Activated naive CD4-positive, alpha-beta T cell treated with anti-CD3 and anti-CD28 coated beads, Interleukin-2, amount 10 ng/mL, durations not matched to agents 7 days and 5 days (primary cell): ENCODE measurements at regions of chr12 and their contacts with region 1.

Region 1: GRCh38 chr12:104478396-104479122 is 21.8 kb downstream of the CHST11 start:
- DNase-seq: peak; percentile 46
- H3K4me3 Mint-ChIP-seq: peak overlapping the region; percentile 83
- H3K27ac Mint-ChIP-seq: peak overlapping the region; percentile 93
- H3K4me1 Mint-ChIP-seq: peaks cover 91% of the 10 kb centered on the region
- H3K27me3 Mint-ChIP-seq: no peaks in the 10 kb centered on the region

Region 2: GRCh38 chr12:104456417-104456949 is 22.1 kb before region 1 on chr12 and contains the start of gene CHST11:
- CTCF ChIA-PET with region 1: interaction called, 15 read pairs
- DNase-seq: peak; percentile 82
- H3K4me3 Mint-ChIP-seq: peak within 1 kb of the TSS; percentile 99
- H3K27ac Mint-ChIP-seq: peak within 1 kb of the TSS; percentile 96
- H3K4me1 Mint-ChIP-seq: peaks cover 39% of the 10 kb centered on the region
- H3K27me3 Mint-ChIP-seq: peaks cover 42% of the 10 kb centered on the region

Region 3: GRCh38 chr12:104467346-104467837 is 11.2 kb before region 1 on chr12:
- CTCF ChIA-PET with region 1: interaction called, 12 read pairs
- DNase-seq: no peak
- H3K4me3 Mint-ChIP-seq: peak overlapping the region; percentile 52
- H3K27ac Mint-ChIP-seq: peak overlapping the region; percentile 81
- H3K4me1 Mint-ChIP-seq: peaks cover 89% of the 10 kb centered on the region
- H3K27me3 Mint-ChIP-seq: no peaks in the 10 kb centered on the region

Region 4: DNA sequence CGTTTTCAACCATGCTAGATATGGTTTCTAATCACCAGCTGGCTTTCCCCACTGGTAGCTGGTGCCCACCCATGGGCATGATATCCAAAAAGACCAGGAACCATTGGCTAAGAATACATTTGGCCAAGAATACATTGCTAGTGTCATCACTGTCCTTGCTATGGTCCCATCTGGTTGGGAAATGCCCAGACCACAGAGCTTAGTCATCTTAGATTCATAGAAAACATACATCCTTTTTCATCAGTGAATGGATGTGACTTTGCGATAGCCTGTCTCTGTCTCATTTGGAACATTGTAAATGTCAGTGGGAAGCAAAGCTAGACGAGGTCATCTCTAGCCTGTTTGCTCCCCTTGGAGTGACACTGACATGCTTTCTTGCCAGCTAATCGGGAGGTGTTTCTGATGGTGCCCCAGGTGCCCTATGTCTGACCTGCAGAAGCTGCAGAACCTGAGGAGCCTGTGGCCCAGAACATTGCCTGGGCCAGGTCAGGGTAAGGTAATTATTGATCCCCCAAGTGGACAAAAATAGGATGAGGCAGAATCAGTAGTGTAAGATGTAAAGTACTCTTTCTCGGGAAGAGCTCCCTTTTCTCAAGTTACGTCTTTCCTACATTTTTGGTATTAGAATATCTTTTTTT is 284.7 kb after region 1 on chr12:
- CTCF ChIA-PET with region 1: no interaction called
- DNase-seq: no peak
- H3K4me3 Mint-ChIP-seq: no peak overlapping the region
- H3K27ac Mint-ChIP-seq: no peak overlapping the region
- H3K4me1 Mint-ChIP-seq: peaks cover 35% of the 10 kb centered on the region
- H3K27me3 Mint-ChIP-seq: no peaks in the 10 kb centered on the region